Left ventricle myocardium superior (tissue), 1 donor: ENCODE measurements at regions of chr19 and their contacts with region 1.

Region 1: GRCh38 chr19:19053508-19054314 is 10.1 kb upstream of the SLC25A42 start:
- DNase-seq: peak; percentile 82
- ATAC-seq: peak; percentile 83

Region 2: DNA sequence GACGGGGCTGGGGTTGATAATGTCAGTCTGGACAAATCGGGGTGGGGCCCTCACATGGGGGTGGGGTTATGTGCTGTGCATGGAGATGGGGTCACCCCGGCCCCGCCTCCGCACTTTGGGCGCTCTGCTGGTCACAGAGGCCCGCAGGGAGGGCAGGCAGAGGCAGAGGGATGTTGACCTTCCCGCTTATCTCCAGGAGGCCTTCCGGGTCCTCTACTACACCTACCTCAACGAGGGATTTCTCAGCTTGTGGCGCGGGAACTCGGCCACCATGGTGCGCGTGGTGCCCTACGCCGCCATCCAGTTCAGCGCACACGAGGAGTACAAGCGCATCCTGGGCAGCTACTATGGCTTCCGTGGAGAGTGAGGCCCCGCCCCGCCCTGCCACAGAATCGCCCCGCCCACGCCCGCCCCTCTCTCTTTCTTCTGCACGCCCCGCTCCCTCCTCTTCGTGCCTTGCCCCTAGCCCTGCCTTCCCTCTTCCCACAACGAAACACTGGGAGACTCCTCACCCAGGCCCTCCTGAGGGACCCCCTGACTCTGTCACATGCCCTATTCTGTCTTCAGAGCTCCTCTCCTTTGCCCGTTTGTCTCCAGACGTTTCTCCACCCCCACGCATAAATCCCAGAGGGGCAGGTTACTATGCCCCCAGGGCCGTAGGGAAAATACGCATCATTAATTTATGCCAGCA is 51.8 kb after region 1 on chr19:
- intact Hi-C with region 1: loop called (anchors 10 kb)
- DNase-seq: peak; percentile 78
- ATAC-seq: peak; percentile 82

Region 3: DNA sequence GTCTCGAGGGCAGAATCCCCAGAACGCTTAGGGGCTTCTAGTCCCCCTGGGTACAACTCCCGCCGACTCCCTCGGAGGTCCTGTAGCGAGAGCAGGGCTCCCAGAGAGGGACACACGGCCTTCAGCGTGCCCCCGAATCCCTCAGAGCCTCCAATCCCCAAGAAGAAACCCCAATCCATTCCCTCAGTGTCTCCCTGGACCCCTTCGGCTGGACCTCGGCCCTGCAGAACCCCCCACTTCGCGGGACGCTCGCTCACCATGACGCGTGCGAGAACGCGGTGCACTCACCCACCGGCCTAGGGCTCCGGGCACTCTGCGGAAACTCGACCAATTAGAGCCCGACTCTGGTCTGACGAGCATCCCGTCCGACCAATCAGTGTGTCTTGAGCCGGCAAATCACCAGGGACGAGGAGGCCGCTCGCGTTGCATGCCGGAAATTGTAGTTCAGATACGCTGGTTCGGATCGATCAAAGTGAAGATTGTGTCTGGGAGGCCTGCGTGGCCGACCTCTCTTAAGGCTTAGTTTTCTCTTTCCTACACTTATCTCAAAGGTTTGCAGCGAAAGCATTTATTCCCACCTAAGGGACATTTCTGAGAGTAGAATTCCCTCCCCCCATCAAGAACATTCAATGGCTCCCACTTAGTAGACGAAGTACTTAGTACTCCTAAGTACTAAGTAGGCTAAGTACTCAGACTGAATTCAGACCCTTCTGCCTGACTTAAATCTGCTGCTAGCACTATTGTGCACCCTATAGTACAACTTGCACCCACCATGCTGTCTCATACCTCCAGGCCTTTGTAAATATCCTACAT is 84.7 kb after region 1 on chr19 and contains the start of gene TMEM161A:
- intact Hi-C with region 1: loop called (anchors 5 kb)
- DNase-seq: peak; percentile 98
- ATAC-seq: peak; percentile 93
- total RNA-seq, gene TMEM161A: 24.7 TPM